ENCODE measurements at regions of chr5 and their contacts with region 1.

Region 1: DNA sequence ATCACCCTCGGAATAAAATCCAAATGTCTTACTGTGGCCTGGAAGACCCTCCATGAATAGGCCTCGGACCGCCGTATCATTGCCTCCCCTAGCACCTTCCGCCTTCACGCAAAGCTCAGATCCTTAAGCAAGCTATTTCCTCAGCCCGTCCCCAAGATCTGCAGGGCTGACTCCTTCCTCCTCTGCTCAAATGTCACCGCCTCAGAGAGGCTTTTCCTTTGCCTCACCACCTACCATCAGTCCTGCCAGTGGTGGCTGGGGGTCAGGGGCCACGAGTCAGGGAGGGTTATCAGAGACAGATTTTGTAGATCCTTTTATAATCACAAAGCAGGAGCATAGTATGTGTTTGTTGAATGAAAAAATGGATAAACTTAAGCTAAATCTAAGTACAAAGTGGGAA is 74.4 kb upstream of the KIF2A start:
- DNase-seq: no peak
- ATAC-seq: no peak
- H3K4me3 ChIP-seq: no peak overlapping the region
- H3K27ac ChIP-seq: no peak overlapping the region
- H3K4me1 ChIP-seq: no peaks in the 10 kb centered on the region
- H3K27me3 ChIP-seq: no peaks in the 10 kb centered on the region
- CTCF ChIP-seq: no peak

Region 2: DNA sequence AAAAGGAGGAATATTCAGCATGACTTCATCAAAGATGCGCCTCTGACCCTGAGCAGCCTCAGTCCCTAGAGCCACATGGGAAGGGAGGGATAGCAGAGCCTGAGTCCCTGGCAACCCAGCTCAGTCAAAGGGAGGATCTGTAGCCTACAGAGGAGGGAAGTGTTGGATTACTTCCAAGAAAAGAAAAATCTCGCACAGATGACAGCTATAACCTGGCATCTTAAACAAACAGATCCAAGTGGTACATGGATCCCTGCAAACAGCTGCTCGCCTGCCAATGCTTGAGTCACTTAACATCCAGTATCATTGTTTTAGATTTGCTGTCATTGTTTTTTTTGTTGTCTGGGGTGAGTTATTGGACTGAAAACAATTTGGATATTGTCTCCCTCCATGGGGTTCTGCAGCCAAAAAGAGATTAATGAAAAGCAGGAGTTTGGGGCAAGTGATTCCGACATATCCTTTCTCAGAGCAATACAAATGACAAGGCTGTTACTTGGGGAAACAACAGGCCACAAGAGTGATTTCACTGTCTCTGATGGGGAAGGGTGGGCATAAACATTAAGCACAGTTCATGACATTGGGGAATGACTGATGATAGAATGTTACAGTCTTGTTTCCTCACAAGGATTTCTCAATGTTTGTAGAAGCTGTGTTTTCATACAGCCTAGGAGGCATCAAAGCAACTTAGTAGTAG is 79.0 kb before region 1 on chr5:
- intact Hi-C with region 1: no loop called
- DNase-seq: no peak
- ATAC-seq: no peak
- H3K4me3 ChIP-seq: no peak overlapping the region
- H3K27ac ChIP-seq: no peak overlapping the region
- H3K4me1 ChIP-seq: no peaks in the 10 kb centered on the region
- H3K27me3 ChIP-seq: no peaks in the 10 kb centered on the region
- CTCF ChIP-seq: no peak

Region 3: GRCh38 chr5:62354028-62354874 is 122.7 kb after region 1 on chr5:
- intact Hi-C with region 1: loop called in 1 of 2 experiments (anchors 10 kb)
- DNase-seq: peak in 2 of 4 donors; percentile 37 to 51
- ATAC-seq: peak; percentile 85
- H3K4me3 ChIP-seq: no peak overlapping the region
- H3K27ac ChIP-seq: no peak overlapping the region
- H3K4me1 ChIP-seq: no peaks in the 10 kb centered on the region
- H3K27me3 ChIP-seq: no peaks in the 10 kb centered on the region
- CTCF ChIP-seq: peak; percentile 40 to 47

Measured in left lung (tissue), 14 donors.